Mammary epithelial cell (primary cell): ENCODE measurements at regions of chr11 and their contacts with region 1.

Region 1: DNA sequence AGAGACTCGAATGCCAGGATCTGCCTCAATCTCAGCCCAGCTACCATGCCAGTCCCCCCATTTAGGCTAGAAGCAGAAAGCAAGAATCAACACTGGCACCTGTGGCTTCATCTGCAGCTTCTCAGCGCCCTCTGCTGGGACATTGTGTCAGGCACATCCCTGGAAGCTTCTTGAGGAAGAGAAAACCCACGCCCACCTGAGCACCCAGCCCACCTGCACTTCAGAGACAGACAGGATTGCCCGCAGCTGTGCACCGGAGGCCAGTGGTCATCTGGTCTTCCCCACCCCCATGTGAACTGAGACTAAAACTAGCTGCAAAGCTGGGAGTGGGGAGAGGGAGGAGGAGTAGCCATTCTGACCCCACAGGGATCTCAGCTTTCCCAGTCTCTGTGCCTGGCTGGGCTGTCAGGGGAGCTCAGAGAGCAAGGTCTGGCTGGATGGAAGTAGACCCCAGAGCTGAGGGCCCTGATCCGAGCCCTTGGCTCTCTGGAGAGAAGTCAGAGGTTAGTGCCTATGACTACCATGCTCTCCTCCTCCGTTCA is 66.8 kb downstream of the FEZ1 start:
- DNase-seq: peak; percentile 35
- H3K4me3 ChIP-seq: no peak overlapping the region
- H3K27ac ChIP-seq: no peak overlapping the region
- H3K4me1 ChIP-seq: peaks cover 20% of the 10 kb centered on the region
- H3K27me3 ChIP-seq: no peaks in the 10 kb centered on the region
- CTCF ChIP-seq: peak; percentile 88 to 92

Region 2: GRCh38 chr11:124961972-124962609 is 467.1 kb before region 1 on chr11:
- CTCF ChIA-PET with region 1: interaction called, 4 read pairs
- dilution Hi-C with region 1: no loop called
- in situ Hi-C with region 1: loop called in 1 of 2 experiments (anchors 25 kb)
- intact Hi-C with region 1: loop called (anchors 1 kb)
- DNase-seq: peak; percentile 67
- H3K4me3 ChIP-seq: no peak overlapping the region
- H3K27ac ChIP-seq: no peak overlapping the region
- H3K4me1 ChIP-seq: no peaks in the 10 kb centered on the region
- H3K27me3 ChIP-seq: no peaks in the 10 kb centered on the region
- CTCF ChIP-seq: peak; percentile 73 to 76

Region 3: DNA sequence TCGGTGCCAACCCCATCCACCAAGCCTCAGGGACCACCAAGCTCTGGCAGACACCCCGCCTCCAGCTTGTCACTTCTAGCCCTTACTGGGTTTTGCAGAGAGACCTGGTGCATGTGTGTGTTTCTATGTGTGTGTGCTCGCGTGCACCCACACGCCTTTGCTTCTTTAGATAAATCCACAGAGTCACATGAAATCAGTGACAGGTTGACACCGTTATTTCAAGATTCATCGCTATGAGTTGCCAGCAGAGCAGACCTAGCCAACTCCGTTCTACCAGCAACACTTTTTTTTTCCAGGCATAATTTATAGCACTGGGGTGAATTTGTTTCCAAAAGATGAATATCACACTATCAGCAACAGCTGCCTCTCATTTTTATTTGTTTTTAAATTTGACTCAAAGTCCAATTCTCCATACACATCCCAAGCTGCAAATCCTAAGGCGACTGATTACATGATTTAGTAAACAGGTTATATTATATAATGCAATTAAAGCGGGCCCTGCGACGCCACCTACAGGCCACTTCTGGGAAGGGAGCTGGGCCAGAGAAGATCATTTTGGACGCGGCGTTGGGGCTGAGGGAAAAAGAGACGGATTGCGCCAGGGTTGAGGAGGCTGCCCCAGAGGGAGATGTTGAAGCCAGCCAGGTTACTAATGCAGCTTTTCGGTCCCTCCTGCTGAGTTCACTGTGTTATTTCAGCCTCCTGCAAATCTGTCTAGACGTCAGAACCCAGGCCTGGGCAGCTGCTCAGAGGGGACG is 83.6 kb before region 1 on chr11:
- CTCF ChIA-PET with region 1: interaction called, 6 read pairs
- dilution Hi-C with region 1: no loop called
- in situ Hi-C with region 1: no loop called
- intact Hi-C with region 1: loop called (anchors 1 kb)
- DNase-seq: peak; percentile 32
- H3K4me3 ChIP-seq: no peak overlapping the region
- H3K27ac ChIP-seq: no peak overlapping the region
- H3K4me1 ChIP-seq: no peaks in the 10 kb centered on the region
- H3K27me3 ChIP-seq: no peaks in the 10 kb centered on the region
- CTCF ChIP-seq: peak; percentile 85 to 89

Region 4: GRCh38 chr11:125457814-125458343 is 28.6 kb after region 1 on chr11:
- CTCF ChIA-PET with region 1: no interaction called
- dilution Hi-C with region 1: no loop called
- in situ Hi-C with region 1: no loop called
- intact Hi-C with region 1: no loop called
- DNase-seq: no peak
- H3K4me3 ChIP-seq: no peak overlapping the region
- H3K27ac ChIP-seq: no peak overlapping the region
- H3K4me1 ChIP-seq: no peaks in the 10 kb centered on the region
- H3K27me3 ChIP-seq: no peaks in the 10 kb centered on the region
- CTCF ChIP-seq: no peak

Region 5: GRCh38 chr11:125481531-125481930 is 52.3 kb after region 1 on chr11:
- CTCF ChIA-PET with region 1: no interaction called
- dilution Hi-C with region 1: loop called (anchors 10 kb)
- in situ Hi-C with region 1: no loop called
- intact Hi-C with region 1: no loop called
- DNase-seq: peak; percentile 43
- H3K4me3 ChIP-seq: no peak overlapping the region
- H3K27ac ChIP-seq: peak overlapping the region; percentile 32
- H3K4me1 ChIP-seq: peaks cover 19% of the 10 kb centered on the region
- H3K27me3 ChIP-seq: no peaks in the 10 kb centered on the region
- CTCF ChIP-seq: no peak

Region 6: GRCh38 chr11:125514336-125515101 is 85.3 kb after region 1 on chr11:
- CTCF ChIA-PET with region 1: no interaction called
- dilution Hi-C with region 1: no loop called
- in situ Hi-C with region 1: no loop called
- intact Hi-C with region 1: no loop called
- DNase-seq: peak; percentile 98
- H3K4me3 ChIP-seq: no peak overlapping the region
- H3K27ac ChIP-seq: peak overlapping the region; percentile 88
- H3K4me1 ChIP-seq: peaks cover 15% of the 10 kb centered on the region
- H3K27me3 ChIP-seq: no peaks in the 10 kb centered on the region
- CTCF ChIP-seq: no peak

Region 7: DNA sequence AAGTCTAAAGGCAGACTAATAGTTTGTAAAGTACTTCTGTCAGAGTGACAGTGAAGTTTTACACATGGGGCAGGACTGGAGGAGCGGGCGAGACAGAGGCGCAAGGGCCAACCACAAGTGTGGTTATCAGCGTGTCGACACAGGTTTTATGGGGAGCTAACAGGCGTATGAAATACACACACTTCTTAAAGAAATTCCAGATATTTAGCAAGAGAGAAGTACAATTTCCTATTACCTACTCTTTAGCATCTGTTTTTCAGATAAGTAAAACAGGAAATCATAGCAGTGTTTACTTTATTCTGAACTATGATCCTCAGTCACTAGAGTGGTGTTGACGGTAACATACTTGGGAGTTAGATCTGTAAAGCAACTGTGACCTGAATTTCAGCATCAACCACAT is 539.1 kb after region 1 on chr11:
- CTCF ChIA-PET with region 1: no interaction called
- dilution Hi-C with region 1: no loop called
- in situ Hi-C with region 1: no loop called
- intact Hi-C with region 1: no loop called
- DNase-seq: peak; percentile 89
- H3K4me3 ChIP-seq: no peak overlapping the region
- H3K27ac ChIP-seq: no peak overlapping the region
- H3K4me1 ChIP-seq: peaks cover 6% of the 10 kb centered on the region
- H3K27me3 ChIP-seq: no peaks in the 10 kb centered on the region
- CTCF ChIP-seq: no peak